Prostate gland (tissue), 2 donors: ENCODE measurements at regions of chr7 and their contacts with region 1.

Region 1: GRCh38 chr7:33062782-33063443 is 337 bp upstream of the NT5C3A start:
- DNase-seq: peak; percentile 90
- H3K4me3 ChIP-seq: peak overlapping the region; percentile 82 to 90
- H3K27ac ChIP-seq: peak overlapping the region; percentile 94 to 96
- H3K4me1 ChIP-seq: no peaks in the 10 kb centered on the region
- H3K27me3 ChIP-seq: no peaks in the 10 kb centered on the region
- CTCF ChIP-seq: no peak
- POLR2A ChIP-seq: peak; percentile 70

Region 2: GRCh38 chr7:32803406-32804141 is 259.3 kb before region 1 on chr7:
- intact Hi-C with region 1: loop called (anchors 10 kb)
- DNase-seq: no peak
- H3K4me3 ChIP-seq: no peak overlapping the region
- H3K27ac ChIP-seq: no peak overlapping the region
- H3K4me1 ChIP-seq: no peaks in the 10 kb centered on the region
- H3K27me3 ChIP-seq: no peaks in the 10 kb centered on the region
- CTCF ChIP-seq: no peak
- POLR2A ChIP-seq: no peak

Region 3: DNA sequence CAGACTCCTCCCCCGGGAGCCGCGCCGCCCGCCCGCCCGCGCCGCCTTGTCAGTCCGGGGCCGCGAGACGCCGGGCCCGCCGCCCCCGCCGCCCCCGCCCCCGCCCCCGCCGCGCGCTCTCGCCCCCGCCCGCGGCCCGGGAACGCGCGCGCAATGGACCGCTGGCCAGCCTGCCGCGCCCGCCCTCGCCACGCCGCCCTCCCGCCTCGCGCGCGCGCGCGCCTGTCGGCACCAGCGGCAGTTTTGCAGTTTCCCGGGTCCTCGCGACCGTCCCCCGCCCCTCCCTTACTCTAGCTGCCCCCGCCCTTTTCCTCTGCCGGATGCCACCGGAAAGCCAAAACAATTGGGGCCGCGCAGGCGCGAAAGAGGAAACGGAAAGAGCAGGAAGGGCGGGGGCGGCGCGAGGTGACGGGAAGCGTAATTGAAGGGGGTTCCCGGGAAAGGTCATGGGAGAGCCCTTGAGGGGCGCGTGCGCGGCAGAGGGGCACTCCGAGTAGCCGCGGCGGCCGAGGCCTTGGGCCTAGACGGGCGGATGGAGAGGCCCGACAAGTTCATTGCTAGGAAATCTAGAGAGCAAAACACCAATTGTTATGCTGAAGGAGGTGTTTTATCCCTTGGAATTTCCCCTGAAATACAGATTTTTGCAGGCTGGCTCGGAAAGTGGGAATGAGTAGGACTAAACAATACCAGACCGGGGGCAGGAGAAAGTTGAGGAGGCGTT is 171.0 kb before region 1 on chr7:
- intact Hi-C with region 1: loop called (anchors 5 kb)
- DNase-seq: peak; percentile 96
- H3K4me3 ChIP-seq: peak overlapping the region; percentile 94 to 99
- H3K27ac ChIP-seq: peak overlapping the region; percentile 99
- H3K4me1 ChIP-seq: peaks cover 5% of the 10 kb centered on the region
- H3K27me3 ChIP-seq: no peaks in the 10 kb centered on the region
- CTCF ChIP-seq: no peak
- POLR2A ChIP-seq: peak; percentile 70

Region 4: GRCh38 chr7:32942786-32943653 is 119.9 kb before region 1 on chr7:
- intact Hi-C with region 1: loop called (anchors 5 kb)
- DNase-seq: peak; percentile 67
- H3K4me3 ChIP-seq: peak overlapping the region; percentile 72 to 82
- H3K27ac ChIP-seq: peak overlapping the region; percentile 86 to 95
- H3K4me1 ChIP-seq: no peaks in the 10 kb centered on the region
- H3K27me3 ChIP-seq: no peaks in the 10 kb centered on the region
- CTCF ChIP-seq: peak; percentile 58 to 76 (median 64)
- POLR2A ChIP-seq: peak; percentile 47

Region 5: GRCh38 chr7:33109005-33109757 is 46.3 kb after region 1 on chr7 and contains the start of gene RP9:
- intact Hi-C with region 1: loop called (anchors 5 kb)
- DNase-seq: peak; percentile 44
- H3K4me3 ChIP-seq: peak within 1 kb of the TSS; percentile 97 to 99
- H3K27ac ChIP-seq: peak within 1 kb of the TSS; percentile 65 to 73
- H3K4me1 ChIP-seq: peaks cover 5% of the 10 kb centered on the region
- H3K27me3 ChIP-seq: no peaks in the 10 kb centered on the region
- CTCF ChIP-seq: peak; percentile 39 to 69 (median 50)
- POLR2A ChIP-seq: no peak
- total RNA-seq, gene RP9: 7.8 to 18.0 TPM